Activated CD4-positive, alpha-beta T cell treated with anti-CD3 and anti-CD28 coated beads for 36 hours (primary cell): ENCODE measurements at regions of chr18 and their contacts with region 1.

Region 1: DNA sequence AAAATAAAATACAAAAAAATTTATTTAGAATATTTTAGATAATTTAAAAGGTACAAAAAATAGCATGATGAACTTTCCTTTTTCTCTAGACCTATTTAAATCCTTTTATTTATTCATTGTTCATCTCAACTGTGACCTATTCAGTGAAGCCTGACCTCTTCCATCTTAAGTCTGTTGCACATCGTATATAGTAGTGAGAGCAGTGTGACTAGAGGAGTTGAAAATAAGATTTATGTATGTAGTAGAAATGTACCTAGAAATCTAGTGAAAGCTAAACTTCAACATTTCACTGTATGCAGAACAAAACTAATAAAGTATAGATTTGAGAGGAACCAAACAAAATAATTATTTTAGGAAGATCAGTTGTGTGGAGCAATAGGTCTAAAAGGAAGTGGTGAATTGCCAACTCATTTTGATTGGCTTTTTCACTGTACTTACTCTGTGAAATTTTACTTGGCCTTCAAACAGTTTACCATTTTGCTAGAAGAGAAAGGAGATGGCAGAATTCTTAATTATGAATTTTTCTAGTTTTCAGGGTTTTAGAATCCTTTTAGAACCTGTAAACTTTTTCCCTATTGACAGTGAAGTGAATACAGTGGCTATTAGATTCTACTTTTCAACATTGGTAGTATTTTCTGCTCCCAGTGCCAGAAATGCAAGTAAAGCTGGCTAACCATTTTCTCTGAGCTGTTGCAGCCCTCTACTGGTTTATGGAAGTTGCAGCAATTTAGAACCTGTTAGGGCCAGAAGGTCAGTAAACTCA is 11.0 kb downstream of the ANKRD12 start:
- DNase-seq: peak; percentile 33
- ATAC-seq: peak; percentile 59
- H3K4me3 Mint-ChIP-seq: peak overlapping the region; percentile 49
- H3K27ac Mint-ChIP-seq: peak overlapping the region; percentile 93
- H3K4me1 Mint-ChIP-seq: peaks cover 77% of the 10 kb centered on the region
- H3K27me3 Mint-ChIP-seq: no peaks in the 10 kb centered on the region

Region 2: GRCh38 chr18:8704361-8705279 is 443.0 kb before region 1 on chr18:
- CTCF ChIA-PET with region 1: interaction called, 3 read pairs
- POLR2A ChIA-PET with region 1: no interaction called
- intact Hi-C with region 1: loop called in 1 of 2 experiments (anchors 10 kb)
- DNase-seq: peak; percentile 90
- ATAC-seq: peak; percentile 98
- H3K4me3 Mint-ChIP-seq: peak overlapping the region; percentile 80
- H3K27ac Mint-ChIP-seq: no peak overlapping the region
- H3K4me1 Mint-ChIP-seq: peaks cover 12% of the 10 kb centered on the region
- H3K27me3 Mint-ChIP-seq: peaks cover 47% of the 10 kb centered on the region

Region 3: DNA sequence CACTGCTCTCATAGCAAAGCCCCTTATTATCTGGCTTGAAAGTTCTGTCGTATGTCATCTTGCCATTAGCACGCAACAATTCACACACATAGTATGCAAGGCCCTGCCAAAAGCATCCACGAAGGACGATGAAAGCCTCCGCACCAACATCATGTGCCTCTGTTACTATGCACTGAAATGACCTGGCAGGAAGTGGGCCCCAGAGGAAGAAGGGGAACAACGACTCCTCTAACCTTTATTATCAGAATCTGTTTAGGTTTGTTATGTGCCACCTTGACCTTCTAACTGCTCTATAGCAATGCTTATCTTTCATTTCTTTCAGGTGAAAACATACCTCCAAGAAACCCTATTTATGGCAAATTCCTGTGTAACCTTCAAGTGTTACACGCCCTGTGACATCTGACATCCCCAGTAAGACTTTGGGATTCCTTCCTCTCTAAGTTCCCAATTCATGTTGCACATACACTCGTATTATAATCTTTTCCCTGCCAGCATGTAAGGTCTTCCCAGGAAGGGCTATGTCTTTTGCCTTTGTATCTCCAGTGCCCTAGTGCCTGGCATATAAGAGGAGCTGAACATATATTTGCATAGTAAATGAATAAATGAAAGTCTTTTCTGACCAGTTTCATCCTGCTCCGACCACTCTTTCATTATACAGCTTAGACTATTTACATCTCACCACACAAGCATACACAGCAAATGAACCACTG is 52.2 kb before region 1 on chr18:
- CTCF ChIA-PET with region 1: interaction called, 3 read pairs
- POLR2A ChIA-PET with region 1: interaction called, 13 read pairs
- intact Hi-C with region 1: no loop called
- DNase-seq: peak; percentile 82
- ATAC-seq: peak; percentile 69
- H3K4me3 Mint-ChIP-seq: peak overlapping the region; percentile 68
- H3K27ac Mint-ChIP-seq: peak overlapping the region; percentile 100
- H3K4me1 Mint-ChIP-seq: peaks cover 68% of the 10 kb centered on the region
- H3K27me3 Mint-ChIP-seq: no peaks in the 10 kb centered on the region

Region 4: DNA sequence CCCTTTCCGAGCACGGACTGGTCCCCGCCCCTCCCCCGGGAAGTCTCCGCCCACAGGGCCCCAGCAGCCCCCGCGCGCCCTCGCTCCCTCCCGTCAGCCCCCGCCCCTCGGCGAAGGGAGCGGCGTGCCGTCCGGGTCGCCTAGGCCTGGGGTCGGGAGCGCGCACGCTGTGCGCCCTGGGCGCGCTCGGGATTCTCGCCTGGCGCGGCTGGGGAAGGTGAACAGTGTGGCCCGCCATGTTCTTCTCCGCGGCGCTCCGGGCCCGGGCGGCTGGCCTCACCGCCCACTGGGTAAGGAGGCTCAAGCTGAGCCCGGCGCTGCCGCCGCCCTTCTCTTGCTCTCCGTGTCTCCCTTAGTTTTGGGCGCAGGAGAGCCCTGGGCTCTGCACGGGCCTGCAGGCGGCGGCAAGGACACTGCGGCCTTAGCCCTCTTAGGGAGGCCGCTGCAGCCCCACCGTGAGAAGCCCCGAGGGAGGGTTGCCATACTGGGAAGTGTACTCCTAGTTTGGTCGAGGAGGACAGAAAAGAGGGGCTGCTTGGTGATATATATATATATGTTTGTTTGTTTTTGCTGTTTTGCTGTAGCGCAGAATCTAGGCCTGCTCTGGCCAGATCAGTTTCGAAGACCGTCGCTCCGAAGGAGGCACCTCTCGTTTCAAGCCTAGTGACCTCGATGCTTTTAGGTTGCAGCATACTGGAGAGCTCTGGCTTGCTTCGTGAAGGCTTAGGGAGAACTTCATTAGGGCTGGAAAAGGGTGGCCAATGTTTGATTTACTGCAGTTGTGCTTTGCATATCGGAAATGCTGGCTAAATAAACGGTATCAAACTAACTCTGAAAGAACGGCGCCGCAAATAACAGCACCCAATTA is 44.9 kb before region 1 on chr18 and contains the start of gene NDUFV2:
- CTCF ChIA-PET with region 1: interaction called, 3 read pairs
- POLR2A ChIA-PET with region 1: interaction called, 4 read pairs
- intact Hi-C with region 1: loop called in 1 of 2 experiments (anchors 2 kb)
- DNase-seq: peak; percentile 99
- ATAC-seq: peak; percentile 88
- H3K4me3 Mint-ChIP-seq: peak within 1 kb of the TSS; percentile 89
- H3K27ac Mint-ChIP-seq: peak within 1 kb of the TSS; percentile 97
- H3K4me1 Mint-ChIP-seq: peaks cover 40% of the 10 kb centered on the region
- H3K27me3 Mint-ChIP-seq: no peaks in the 10 kb centered on the region
- total RNA-seq, gene NDUFV2: 331 to 372 TPM

Region 5: DNA sequence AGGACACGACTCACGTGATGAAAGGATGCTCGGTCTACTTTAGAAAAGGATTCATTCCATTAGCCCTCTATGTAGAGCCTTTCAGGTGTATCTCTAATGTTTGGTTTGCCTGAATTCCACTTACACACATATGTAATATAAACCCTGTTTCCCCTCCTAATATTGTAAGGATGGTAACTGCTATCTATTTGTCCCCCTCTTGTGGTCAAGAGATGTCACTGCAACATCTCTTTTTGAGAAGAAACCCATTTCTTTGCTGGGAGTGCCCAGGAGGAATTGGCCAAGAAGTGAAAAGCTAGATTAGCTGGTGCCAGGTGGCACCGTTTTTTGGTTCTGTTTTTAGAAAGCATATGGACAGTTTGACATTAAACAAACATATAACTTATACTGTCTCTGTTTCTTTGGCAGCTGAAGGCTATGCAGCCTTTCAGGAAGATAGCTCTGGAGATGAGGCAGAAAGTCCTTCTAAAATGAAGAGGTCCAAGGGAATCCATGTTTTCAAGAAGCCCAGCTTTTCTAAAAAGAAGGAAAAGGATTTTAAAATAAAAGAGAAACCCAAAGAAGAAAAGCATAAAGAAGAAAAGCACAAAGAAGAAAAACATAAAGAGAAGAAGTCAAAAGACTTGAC is 368.9 kb after region 1 on chr18:
- CTCF ChIA-PET with region 1: interaction called, 3 read pairs
- POLR2A ChIA-PET with region 1: no interaction called
- intact Hi-C with region 1: loop called in 1 of 2 experiments (anchors 10 kb)
- DNase-seq: peak; percentile 10
- ATAC-seq: peak; percentile 47
- H3K4me3 Mint-ChIP-seq: no peak overlapping the region
- H3K27ac Mint-ChIP-seq: no peak overlapping the region
- H3K4me1 Mint-ChIP-seq: peaks cover 2% of the 10 kb centered on the region
- H3K27me3 Mint-ChIP-seq: no peaks in the 10 kb centered on the region

Region 6: DNA sequence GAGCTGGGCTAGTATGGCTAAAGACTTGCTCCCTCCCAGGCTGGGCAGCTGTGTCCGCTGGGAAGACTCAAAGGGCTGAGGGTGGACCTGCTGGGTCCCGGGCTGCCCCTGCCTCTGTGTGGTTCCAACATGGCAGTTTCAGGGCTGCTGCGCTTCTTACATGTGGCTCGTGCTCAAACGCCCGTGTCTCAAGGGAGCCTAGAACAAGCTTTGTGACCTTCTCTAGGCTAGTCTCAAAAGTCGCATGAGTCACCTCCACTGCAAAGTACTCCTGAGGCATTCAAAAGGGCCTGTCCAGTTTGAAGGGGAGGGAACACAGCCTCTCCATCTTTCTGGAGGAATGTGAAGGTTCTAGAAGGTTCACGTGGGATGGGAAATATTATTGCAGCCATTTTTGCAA is 515.8 kb after region 1 on chr18:
- CTCF ChIA-PET with region 1: no interaction called
- POLR2A ChIA-PET with region 1: no interaction called
- intact Hi-C with region 1: no loop called
- DNase-seq: no peak
- ATAC-seq: no peak
- H3K4me3 Mint-ChIP-seq: no peak overlapping the region
- H3K27ac Mint-ChIP-seq: no peak overlapping the region
- H3K4me1 Mint-ChIP-seq: no peaks in the 10 kb centered on the region
- H3K27me3 Mint-ChIP-seq: no peaks in the 10 kb centered on the region